OCI-LY7 (cell line): ENCODE measurements at regions of chr1 and their contacts with region 1.

Region 1: DNA sequence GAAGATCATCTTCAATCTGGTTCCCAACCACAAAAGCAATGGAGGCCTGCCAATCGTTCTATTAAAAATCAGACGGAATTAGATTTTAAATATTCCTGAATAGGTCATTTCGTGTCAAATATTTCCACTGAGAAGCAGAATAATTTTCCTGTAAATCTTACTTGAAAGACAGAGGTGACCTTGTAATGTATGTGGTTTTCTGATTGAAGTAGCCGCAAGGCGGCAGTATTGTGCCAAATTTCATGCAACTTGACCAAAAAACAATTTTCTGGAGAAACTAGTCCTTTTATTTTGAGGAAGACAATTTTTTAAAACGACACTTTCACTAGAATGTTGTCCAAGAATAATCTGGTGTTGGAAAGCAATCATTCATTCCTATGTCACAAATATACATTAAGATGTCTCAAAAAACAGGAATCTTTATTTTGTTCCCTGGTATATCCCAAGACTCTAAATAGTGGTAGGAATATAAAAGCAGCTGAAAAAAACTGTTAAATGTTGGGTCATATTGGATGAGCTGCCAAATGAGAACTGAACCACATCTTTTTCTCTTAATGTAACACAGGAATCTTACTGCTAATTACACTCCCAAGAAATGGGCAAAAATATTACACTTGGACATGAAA is 33.6 kb downstream of the SPAG17 start:
- DNase-seq: peak; percentile 48
- H3K4me3 ChIP-seq: no peak overlapping the region
- H3K27ac ChIP-seq: no peak overlapping the region
- H3K4me1 ChIP-seq: no peaks in the 10 kb centered on the region
- CTCF ChIP-seq: peak; percentile 98

Region 2: GRCh38 chr1:118201524-118201923 is 50.1 kb after region 1 on chr1:
- CTCF ChIA-PET with region 1: no interaction called
- POLR2A ChIA-PET with region 1: no interaction called
- intact Hi-C with region 1: loop called (anchors 5 kb)
- DNase-seq: no peak
- H3K4me3 ChIP-seq: no peak overlapping the region
- H3K27ac ChIP-seq: no peak overlapping the region
- H3K4me1 ChIP-seq: no peaks in the 10 kb centered on the region
- CTCF ChIP-seq: no peak

Region 3: DNA sequence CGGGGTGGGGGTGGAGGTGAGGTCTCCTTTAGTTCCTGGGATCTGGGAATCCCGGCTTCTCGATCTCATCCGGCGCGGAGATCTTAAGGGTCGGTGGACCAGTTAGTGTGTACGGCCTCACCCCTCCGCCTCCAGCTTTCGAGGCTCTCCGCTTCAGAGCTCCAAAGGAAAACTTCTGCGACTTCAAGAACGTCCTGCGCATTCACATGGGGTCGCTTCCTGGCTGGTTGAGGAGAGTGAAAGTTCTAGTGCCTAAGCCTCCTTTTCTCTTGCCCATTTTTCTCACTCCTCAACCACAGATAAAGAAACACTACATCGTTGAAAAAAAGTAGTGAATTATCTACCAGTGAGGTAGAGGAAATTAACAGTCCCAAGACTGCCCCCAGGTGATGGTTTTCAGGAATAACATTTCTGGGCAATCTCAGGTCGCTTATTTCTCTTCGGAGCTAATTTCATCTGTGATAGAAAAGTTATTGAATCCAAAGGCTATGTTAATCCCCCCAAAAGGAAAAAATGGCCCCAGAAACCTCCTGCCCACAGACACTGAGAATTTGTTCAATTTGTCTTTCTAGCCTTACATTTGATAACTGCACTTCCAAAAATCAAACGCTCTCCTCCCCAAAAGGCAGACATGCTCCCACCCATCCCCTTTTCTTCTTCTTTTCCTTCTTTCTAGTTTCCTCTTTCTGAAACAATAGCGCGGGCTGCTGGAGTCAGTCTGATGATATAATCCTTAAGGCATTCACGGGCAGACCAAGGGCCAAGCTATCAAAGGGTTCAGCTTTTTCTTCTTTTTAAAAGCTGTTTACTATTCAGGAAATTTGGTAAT is 857.3 kb after region 1 on chr1:
- CTCF ChIA-PET with region 1: no interaction called
- POLR2A ChIA-PET with region 1: no interaction called
- intact Hi-C with region 1: loop called (anchors 5 kb)
- DNase-seq: peak; percentile 52
- H3K4me3 ChIP-seq: no peak overlapping the region
- H3K27ac ChIP-seq: no peak overlapping the region
- H3K4me1 ChIP-seq: no peaks in the 10 kb centered on the region
- CTCF ChIP-seq: peak; percentile 86